Activated CD4-positive, alpha-beta T cell treated with anti-CD3 and anti-CD28 coated beads, Interleukin-2, amount 10 ng/mL, durations not matched to agents 24 days and 14 days (primary cell): ENCODE measurements at regions of chr17 and their contacts with region 1.

Region 1: DNA sequence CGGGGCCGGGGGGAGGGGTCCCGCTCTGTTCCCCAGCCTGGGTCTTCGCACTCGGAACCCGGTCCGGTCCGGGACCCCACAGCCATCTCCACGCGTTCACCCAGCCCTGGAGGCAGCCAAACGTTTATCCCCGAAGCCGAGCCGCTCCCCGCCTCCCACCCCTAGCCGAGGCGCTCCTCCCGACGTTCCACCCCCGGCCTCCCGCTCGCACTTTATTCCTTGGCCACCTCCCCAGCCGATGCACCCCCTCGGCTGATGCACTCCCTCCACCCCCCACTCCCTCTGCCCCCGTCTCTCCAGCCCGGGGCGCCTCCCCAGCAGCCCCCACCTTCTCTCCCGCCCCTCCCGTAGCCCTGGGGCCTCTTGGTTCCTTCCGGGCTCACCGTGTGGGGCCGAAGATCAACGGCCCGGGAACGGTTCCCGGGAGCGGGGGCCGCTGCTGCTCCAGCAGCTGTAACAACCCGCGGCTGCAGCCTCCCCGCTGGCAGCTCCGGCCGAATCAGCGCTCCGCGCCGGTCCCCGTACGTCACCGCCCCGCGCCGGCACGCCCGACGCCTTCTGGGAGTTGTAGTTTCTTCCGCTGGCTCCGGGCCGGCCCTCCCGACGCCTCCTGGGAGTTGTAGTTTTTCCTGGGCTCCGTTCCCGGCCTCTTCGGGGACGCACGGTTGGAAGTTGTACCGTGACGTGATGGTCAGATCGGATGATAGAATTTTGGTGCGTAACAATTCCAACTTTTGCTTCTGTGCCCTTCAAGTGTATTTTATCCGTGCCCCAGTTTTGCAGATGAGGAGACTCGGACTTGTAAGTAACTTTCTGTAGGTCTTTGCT is at the starts of genes LRRC3C and ORMDL3:
- DNase-seq: peak; percentile 98
- H3K4me3 Mint-ChIP-seq: peak within 1 kb of the TSS; percentile 88
- H3K27ac Mint-ChIP-seq: peak within 1 kb of the TSS; percentile 80
- H3K4me1 Mint-ChIP-seq: peaks cover 47% of the 10 kb centered on the region
- H3K27me3 Mint-ChIP-seq: no peaks in the 10 kb centered on the region
- total RNA-seq, gene LRRC3C: not detected in 2 replicates
- total RNA-seq, gene ORMDL3: 65.7 and 65.8 TPM in 2 replicates

Region 2: DNA sequence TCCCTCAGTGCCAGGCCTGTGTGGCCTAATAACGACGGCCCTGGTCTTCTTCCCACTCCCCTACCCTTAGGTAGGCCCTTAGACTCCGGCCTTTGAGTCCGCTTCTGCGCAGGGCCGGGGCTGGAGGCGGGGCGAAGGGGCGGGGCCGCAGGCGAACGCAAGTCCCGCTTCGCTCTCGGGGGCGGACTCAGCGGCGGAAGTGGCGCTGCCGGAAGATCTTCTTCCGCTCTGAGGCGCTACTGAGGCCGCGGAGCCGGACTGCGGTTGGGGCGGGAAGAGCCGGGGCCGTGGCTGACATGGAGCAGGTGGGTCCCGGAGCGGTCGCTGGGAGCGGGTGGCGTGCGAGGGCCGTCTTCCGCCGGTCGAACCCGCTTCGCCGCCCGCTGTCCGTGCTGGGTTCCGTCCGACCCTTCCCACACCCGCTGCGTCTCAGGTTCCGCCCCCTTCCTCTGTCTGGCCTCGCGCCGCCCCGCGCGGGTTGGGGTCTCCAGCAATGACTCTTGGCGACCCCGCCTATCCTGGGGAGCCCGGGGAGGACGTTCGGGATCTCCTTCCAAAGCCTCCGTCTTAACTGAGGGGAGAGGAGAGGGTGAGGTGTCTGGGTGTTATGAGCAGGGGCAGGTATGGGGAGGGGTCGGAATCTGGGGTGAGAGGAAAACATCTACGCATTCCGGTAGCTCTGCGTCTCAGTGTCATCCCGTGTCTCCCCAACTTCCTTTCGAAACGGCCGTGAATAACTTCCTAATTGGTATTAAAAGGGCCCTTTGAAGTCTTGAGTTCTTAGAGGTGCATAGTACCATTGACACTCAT is 290.2 kb before region 1 on chr17 and contains the start of gene STARD3:
- intact Hi-C with region 1: loop called (anchors 5 kb)
- DNase-seq: peak; percentile 97
- H3K4me3 Mint-ChIP-seq: peak within 1 kb of the TSS; percentile 90
- H3K27ac Mint-ChIP-seq: peak within 1 kb of the TSS; percentile 79
- H3K4me1 Mint-ChIP-seq: peaks cover 35% of the 10 kb centered on the region
- H3K27me3 Mint-ChIP-seq: no peaks in the 10 kb centered on the region
- total RNA-seq, gene STARD3: 53.6 and 60.3 TPM in 2 replicates

Region 3: GRCh38 chr17:39769974-39770587 is 157.2 kb before region 1 on chr17:
- intact Hi-C with region 1: loop called (anchors 5 kb)
- DNase-seq: peak; percentile 86
- H3K4me3 Mint-ChIP-seq: peak overlapping the region; percentile 13
- H3K27ac Mint-ChIP-seq: peak overlapping the region; percentile 74
- H3K4me1 Mint-ChIP-seq: peaks cover 69% of the 10 kb centered on the region
- H3K27me3 Mint-ChIP-seq: no peaks in the 10 kb centered on the region

Region 4: DNA sequence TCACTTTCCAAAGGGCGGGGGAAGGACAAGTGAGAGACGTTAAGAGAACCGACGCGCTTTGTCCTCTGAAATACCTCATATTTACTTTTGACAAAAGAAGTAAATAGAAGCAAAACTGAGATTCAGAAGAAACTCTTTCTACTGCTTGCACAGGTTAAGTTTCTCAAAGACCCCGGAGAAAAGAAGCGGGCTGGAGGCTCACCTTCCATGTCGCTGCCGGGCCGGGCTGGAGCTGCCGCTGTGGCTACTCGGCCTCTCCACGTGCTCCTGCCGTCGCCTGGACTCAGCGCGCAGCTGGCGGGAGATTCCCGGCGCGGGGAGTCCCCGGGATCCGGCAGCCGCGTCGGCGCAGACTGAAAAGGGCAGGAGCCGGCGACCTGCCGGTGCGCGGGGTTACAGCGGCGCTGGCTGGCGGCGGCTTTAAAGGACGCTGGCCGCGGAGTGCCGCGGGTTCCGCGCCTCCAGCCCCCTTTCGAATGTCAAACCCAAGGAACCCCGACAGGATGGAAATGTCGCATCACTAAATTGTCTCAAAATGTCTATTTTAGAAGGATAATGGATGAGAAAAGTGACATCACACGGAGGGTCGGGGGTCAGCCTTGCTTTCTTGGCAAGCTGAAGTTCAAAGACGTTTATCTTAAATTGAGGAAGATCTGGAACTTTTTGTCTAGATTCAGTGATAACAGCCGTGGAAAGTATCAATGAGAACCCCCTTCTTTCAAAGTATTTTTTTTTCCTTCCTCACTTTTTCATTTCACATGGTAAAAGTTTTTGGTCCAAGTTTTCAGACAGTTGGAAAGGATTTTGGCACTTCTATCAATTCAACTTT is 63.2 kb before region 1 on chr17 and contains the start of gene IKZF3:
- intact Hi-C with region 1: loop called (anchors 1 kb)
- DNase-seq: peak; percentile 95
- H3K4me3 Mint-ChIP-seq: peak within 1 kb of the TSS; percentile 90
- H3K27ac Mint-ChIP-seq: peak within 1 kb of the TSS; percentile 87
- H3K4me1 Mint-ChIP-seq: peaks cover 51% of the 10 kb centered on the region
- H3K27me3 Mint-ChIP-seq: peaks cover 4% of the 10 kb centered on the region
- total RNA-seq, gene IKZF3: 14.7 and 15.9 TPM in 2 replicates

Region 5: GRCh38 chr17:39939588-39940419 is 12.5 kb after region 1 on chr17:
- intact Hi-C with region 1: loop called (anchors 1 kb)
- DNase-seq: peak; percentile 89
- H3K4me3 Mint-ChIP-seq: peak overlapping the region; percentile 61
- H3K27ac Mint-ChIP-seq: peak overlapping the region; percentile 85
- H3K4me1 Mint-ChIP-seq: peaks cover 20% of the 10 kb centered on the region
- H3K27me3 Mint-ChIP-seq: no peaks in the 10 kb centered on the region